Adrenal gland (tissue), 19 donors: ENCODE measurements at regions of chr1 and their contacts with region 1.

Region 1: DNA sequence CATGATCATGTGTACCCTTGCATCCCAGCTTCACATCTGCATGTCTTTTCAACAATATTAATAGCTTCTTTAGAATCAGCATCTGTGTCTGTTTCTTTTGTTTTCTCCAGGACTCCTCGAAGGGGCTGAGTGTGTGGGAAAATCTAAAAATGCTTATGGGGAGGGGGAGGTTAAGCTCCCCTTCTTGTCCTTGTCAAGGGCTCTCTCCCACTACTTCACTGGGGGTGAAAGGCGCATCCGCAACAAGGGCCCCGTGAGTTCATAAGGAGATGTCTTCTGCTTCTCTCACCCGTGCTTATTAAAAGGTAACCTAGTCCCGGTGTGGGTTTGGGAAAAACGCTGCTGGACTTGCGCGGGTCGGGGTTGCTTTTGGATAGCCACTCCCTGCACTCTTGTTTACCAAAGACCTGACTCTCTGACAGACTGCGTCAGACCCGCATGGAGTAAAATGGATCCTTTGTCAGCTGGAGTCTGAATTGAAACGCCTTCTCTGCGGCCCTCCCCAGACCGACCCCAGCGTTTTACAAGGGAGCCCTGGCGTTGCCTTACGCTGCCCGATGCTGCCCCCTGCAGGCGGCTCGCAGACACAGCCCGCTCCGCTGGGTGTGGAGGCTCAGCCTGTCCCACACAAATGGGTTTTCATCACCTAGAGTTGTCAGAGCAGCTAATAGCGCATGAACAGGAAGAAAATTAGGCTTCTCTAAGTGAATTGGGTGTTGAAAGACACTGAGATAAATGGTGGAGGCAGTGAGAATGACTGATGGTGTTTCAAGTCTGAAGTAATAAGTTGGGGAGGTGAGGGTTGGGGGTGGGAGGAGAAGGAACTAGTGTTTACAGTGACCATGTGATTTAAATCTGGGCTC is 53.8 kb downstream of the IER5 start:
- DNase-seq: peak; percentile 78 to 95 (median 88)
- H3K4me3 ChIP-seq: peak overlapping the region in 1 of 4 donors; percentile 40
- H3K27ac ChIP-seq: no peak overlapping the region
- H3K4me1 ChIP-seq: peaks cover 6 to 10% of the 10 kb centered on the region in 2 donors
- H3K27me3 ChIP-seq: no peaks in the 10 kb centered on the region
- CTCF ChIP-seq: peak; percentile 96 to 99 (median 97)
- POLR2A ChIP-seq: no peak

Region 2: GRCh38 chr1:180527101-180527669 is 615.1 kb before region 1 on chr1:
- intact Hi-C with region 1: loop called in 1 of 2 experiments (anchors 10 kb)
- DNase-seq: peak in 4 of 7 donors; percentile 19 to 58 (median 35)
- H3K4me3 ChIP-seq: no peak overlapping the region
- H3K27ac ChIP-seq: no peak overlapping the region
- H3K4me1 ChIP-seq: no peaks in the 10 kb centered on the region
- H3K27me3 ChIP-seq: no peaks in the 10 kb centered on the region
- CTCF ChIP-seq: no peak
- POLR2A ChIP-seq: no peak

Region 3: GRCh38 chr1:180881806-180882509 is 260.4 kb before region 1 on chr1:
- intact Hi-C with region 1: loop called in 1 of 2 experiments (anchors 5 kb)
- DNase-seq: no peak
- H3K4me3 ChIP-seq: no peak overlapping the region
- H3K27ac ChIP-seq: no peak overlapping the region
- H3K4me1 ChIP-seq: no peaks in the 10 kb centered on the region
- H3K27me3 ChIP-seq: no peaks in the 10 kb centered on the region
- CTCF ChIP-seq: peak; percentile 25 to 68 (median 48)
- POLR2A ChIP-seq: no peak

Region 4: DNA sequence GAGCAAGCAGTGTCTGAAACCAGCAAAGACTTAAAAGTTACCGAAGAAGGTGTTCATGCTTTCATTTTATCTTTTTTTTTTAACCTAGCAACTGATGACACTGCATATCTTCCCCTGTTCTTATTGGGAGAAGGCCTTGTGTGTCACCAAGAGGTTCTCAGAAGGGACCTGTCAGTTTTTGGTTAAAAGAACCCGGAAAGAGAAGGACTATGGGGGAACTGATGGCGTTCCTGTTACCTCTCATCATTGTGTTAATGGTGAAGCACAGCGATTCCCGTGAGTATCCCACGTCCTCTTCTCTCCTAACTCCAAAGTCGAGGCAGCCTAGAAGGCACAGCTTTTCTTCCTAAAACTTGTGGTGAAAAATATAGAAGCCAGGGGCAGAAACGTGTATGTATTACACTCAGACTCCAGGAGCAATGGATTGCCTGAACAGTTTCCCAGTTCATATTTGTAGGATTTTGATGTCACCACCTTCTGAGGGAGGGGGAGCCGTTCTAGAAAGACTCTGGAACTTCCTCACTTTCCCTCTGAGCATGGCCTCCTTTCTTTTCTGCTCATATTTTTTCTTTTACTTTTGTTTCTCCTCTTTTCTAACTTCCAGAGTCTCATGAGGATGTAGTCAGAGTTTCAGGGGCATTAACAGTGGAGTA is 108.4 kb before region 1 on chr1 and contains the start of gene MR1:
- intact Hi-C with region 1: loop called in 1 of 2 experiments (anchors 10 kb)
- DNase-seq: peak; percentile 20 to 63 (median 51)
- H3K4me3 ChIP-seq: peak within 1 kb of the TSS in 3 of 4 donors; percentile 23 to 58 (median 50)
- H3K27ac ChIP-seq: peak within 1 kb of the TSS; percentile 84 to 97 (median 88)
- H3K4me1 ChIP-seq: peaks cover 18 to 51% of the 10 kb centered on the region in 2 donors
- H3K27me3 ChIP-seq: no peaks in the 10 kb centered on the region
- CTCF ChIP-seq: no peak
- POLR2A ChIP-seq: peak; percentile 42 to 75
- total RNA-seq, gene MR1: 10.1 to 36.1 (median 27.7) TPM

Region 5: GRCh38 chr1:181088079-181089016 is 54.0 kb before region 1 on chr1 and contains the start of gene IER5:
- intact Hi-C with region 1: loop called (anchors 2 kb)
- DNase-seq: peak; percentile 94 to 98 (median 96)
- H3K4me3 ChIP-seq: peak within 1 kb of the TSS; percentile 34 to 92 (median 68)
- H3K27ac ChIP-seq: peak within 1 kb of the TSS; percentile 12 to 93 (median 83)
- H3K4me1 ChIP-seq: peaks cover 16 to 24% of the 10 kb centered on the region in 2 donors
- H3K27me3 ChIP-seq: no peaks in the 10 kb centered on the region
- CTCF ChIP-seq: no peak
- POLR2A ChIP-seq: peak; percentile 99 to 100
- total RNA-seq, gene IER5: 3.9 to 19.2 (median 10.9) TPM